ENCODE measurements at regions of chr16 and their contacts with region 1.

Region 1: DNA sequence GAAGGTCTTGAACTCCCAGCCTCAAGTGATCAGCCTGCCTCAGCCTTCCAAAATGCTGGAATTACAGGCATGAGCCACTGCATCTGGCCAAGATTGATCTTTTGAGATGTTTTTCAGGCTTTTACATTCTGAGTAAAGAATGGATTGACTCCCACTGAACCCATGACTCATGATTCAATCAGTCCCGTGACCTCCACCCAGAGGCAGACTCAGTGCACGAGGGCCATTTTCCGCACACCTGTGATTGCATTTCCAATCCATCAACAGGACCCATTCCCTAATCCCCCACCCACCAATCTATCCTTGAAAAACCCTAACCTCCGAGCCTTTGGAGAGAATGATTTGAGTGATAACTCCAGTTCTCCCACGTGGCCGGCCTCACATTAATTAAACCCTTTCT is 40.4 kb upstream of the PRKCB start:
- DNase-seq: no peak
- H3K4me3 ChIP-seq: no peak overlapping the region
- H3K4me1 ChIP-seq: no peaks in the 10 kb centered on the region
- H3K27me3 ChIP-seq: no peaks in the 10 kb centered on the region

Region 2: GRCh38 chr16:23905027-23905426 is 109.6 kb after region 1 on chr16:
- in situ Hi-C with region 1: no loop called
- DNase-seq: no peak
- H3K4me3 ChIP-seq: no peak overlapping the region
- H3K4me1 ChIP-seq: no peaks in the 10 kb centered on the region
- H3K27me3 ChIP-seq: peaks cover 8% of the 10 kb centered on the region; the same call in 1 of the 2 replicates

Region 3: DNA sequence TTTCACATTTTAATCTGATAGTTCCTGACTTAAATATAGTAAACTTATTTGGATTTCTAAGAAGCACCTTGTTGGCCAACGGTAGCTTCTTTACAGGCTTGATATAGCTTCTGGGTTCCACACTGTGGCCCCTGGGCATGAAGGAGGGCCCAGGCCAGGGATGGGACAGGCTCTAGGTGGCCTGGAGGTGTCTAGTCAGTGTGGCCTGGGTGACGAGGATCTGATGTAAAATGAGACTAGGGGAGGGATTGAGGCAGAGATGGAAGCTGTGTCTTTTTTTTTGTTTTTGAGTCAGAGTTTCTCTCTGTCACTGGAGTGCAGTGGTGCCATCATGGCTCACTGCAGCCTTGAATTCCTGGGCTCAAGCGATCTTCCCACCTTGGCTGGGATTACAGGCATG is 227.4 kb after region 1 on chr16:
- in situ Hi-C with region 1: loop called (anchors 10 kb)
- DNase-seq: no peak
- H3K4me3 ChIP-seq: no peak overlapping the region
- H3K4me1 ChIP-seq: no peaks in the 10 kb centered on the region
- H3K27me3 ChIP-seq: no peaks in the 10 kb centered on the region